ENCODE measurements at regions of chr2 and their contacts with region 1.

Region 1: DNA sequence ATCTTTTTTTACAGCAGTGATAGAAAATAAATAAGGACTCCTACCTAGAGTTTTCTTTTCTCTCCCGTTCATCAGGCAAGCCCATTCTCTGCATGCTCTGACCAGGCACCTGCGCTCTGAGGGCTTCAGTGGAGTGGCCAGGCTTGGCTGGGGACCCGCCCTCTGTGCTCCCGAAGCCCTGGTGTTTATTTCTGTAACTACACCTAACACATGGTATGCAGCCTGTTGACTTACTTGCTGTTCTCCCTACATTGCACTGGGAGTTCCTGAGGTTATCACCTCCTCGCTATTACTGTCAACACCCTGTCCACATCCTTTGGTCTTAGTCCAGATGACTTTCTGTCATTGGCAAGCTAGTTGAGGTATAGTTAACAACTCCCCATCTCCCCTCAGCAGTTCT is 317.7 kb downstream of the LPIN1 start:
- DNase-seq: peak; percentile 56 to 69
- ATAC-seq: peak; percentile 95 to 98 (median 95)
- H3K4me3 ChIP-seq: peak overlapping the region; percentile 20
- H3K4me3 Mint-ChIP-seq: peak overlapping the region; percentile 99
- H3K27ac ChIP-seq: peak overlapping the region; percentile 24
- H3K27ac Mint-ChIP-seq: peak overlapping the region; percentile 87
- H3K4me1 ChIP-seq: peaks cover 50% of the 10 kb centered on the region
- H3K4me1 Mint-ChIP-seq: peaks cover 79 to 85% of the 10 kb centered on the region in 2 donors
- H3K27me3 ChIP-seq: peaks cover 9% of the 10 kb centered on the region
- H3K27me3 Mint-ChIP-seq: peaks cover 0 to 15% of the 10 kb centered on the region in 2 donors
- CTCF ChIP-seq: peak; percentile 59

Region 2: DNA sequence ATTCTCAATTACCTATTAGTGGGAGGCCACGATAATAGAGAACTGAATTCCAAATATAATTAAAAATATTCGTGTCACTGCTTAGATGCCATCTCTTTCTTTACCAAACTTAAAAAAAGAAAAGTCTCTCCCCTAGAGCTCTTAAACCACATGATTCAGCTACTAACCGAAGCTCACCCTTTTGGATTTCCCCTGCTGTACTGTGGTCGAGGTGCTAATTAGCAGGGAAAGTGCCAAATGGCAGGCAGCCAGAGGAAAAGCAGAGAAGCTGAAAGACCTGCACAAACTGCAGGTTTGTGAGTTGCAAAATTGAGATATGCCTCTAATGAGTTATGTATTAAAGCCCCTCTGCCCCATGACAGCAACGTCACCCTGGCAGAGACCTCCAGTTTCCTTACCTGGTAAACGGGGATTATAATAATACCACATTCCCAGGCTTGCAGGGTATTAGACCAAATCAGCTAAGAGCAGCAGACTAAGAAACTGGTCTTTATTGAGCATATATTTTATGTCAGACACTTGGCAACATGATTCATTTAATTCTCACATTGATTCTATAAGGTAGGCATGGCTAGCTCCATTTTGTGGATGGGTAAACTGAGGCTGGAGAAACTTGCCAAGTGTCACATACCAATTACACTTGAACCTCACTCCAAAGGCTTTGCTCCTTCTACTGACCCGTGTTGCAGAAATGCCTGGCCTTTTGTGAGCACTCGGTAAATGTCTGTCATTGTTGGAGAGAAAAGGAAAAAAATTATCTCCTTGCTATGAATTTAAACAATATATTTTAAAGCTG is 58.1 kb before region 1 on chr2:
- intact Hi-C with region 1: loop called (anchors 1 kb)
- DNase-seq: peak; percentile 81 to 91
- ATAC-seq: peak; percentile 86 to 98 (median 87)
- H3K4me3 ChIP-seq: no peak overlapping the region
- H3K4me3 Mint-ChIP-seq: peak overlapping the region; percentile 55
- H3K27ac ChIP-seq: no peak overlapping the region
- H3K27ac Mint-ChIP-seq: peak overlapping the region; percentile 50 to 81
- H3K4me1 ChIP-seq: peaks cover 19% of the 10 kb centered on the region
- H3K4me1 Mint-ChIP-seq: peaks cover 50 to 59% of the 10 kb centered on the region in 2 donors
- H3K27me3 ChIP-seq: peaks cover 67% of the 10 kb centered on the region
- H3K27me3 Mint-ChIP-seq: peaks cover 74 to 94% of the 10 kb centered on the region in 2 donors
- CTCF ChIP-seq: no peak

Region 3: DNA sequence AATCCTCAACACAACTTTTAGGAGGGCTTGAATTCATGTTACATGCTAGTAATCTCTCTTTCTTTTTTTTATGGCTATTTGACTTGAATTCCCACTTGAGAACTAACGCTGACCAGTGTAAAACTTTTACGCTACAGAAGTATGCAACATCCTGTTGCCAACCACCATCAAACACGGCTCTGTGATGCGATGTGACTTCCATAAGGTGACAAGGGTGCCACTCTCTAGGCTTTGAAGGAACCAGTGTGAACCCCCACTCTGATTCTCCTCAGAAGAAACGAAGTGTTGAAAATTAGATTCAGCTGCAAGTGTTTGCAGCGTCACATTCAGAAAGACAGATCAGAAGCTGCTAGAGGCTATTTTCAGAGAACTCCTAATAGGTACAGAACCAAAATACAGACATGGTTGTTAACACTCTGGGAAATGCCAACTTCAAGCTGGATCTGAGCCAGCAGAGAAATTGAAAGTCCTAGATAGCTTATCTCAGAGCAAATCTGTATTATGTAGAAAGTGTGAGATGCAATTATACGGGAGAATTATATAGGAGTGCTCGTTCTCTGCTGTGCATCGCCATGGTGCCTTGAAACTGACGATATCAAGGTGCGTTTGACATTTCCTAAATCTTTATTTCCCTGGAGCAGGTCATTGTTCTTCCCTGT is 46.5 kb before region 1 on chr2:
- intact Hi-C with region 1: no loop called
- DNase-seq: peak in 1 of 2 donors; percentile 20
- ATAC-seq: peak; percentile 30 to 92 (median 58)
- H3K4me3 ChIP-seq: no peak overlapping the region
- H3K4me3 Mint-ChIP-seq: peak overlapping the region; percentile 7
- H3K27ac ChIP-seq: no peak overlapping the region
- H3K27ac Mint-ChIP-seq: no peak overlapping the region
- H3K4me1 ChIP-seq: peaks cover 3% of the 10 kb centered on the region
- H3K4me1 Mint-ChIP-seq: peaks cover 26 to 33% of the 10 kb centered on the region in 2 donors
- H3K27me3 ChIP-seq: peaks cover 26% of the 10 kb centered on the region
- H3K27me3 Mint-ChIP-seq: peaks cover 69 to 79% of the 10 kb centered on the region in 2 donors
- CTCF ChIP-seq: no peak

Region 4: GRCh38 chr2:12044857-12045256 is 19.3 kb before region 1 on chr2:
- intact Hi-C with region 1: loop called (anchors 2 kb)
- DNase-seq: peak; percentile 26 to 64
- ATAC-seq: peak; percentile 77 to 86 (median 86)
- H3K4me3 ChIP-seq: no peak overlapping the region
- H3K4me3 Mint-ChIP-seq: peak overlapping the region; percentile 67
- H3K27ac ChIP-seq: peak overlapping the region; percentile 30
- H3K27ac Mint-ChIP-seq: peak overlapping the region; percentile 1 to 81
- H3K4me1 ChIP-seq: peaks cover 61% of the 10 kb centered on the region
- H3K4me1 Mint-ChIP-seq: peaks cover 63 to 96% of the 10 kb centered on the region in 2 donors
- H3K27me3 ChIP-seq: peaks cover 4% of the 10 kb centered on the region
- H3K27me3 Mint-ChIP-seq: peaks cover 7 to 41% of the 10 kb centered on the region in 2 donors
- CTCF ChIP-seq: no peak

Region 5: GRCh38 chr2:12074126-12074844 is 10.1 kb after region 1 on chr2:
- intact Hi-C with region 1: loop called (anchors 1 kb)
- DNase-seq: peak in 1 of 2 donors; percentile 27
- ATAC-seq: peak; percentile 74 to 91 (median 83)
- H3K4me3 ChIP-seq: no peak overlapping the region
- H3K4me3 Mint-ChIP-seq: peak overlapping the region; percentile 80
- H3K27ac ChIP-seq: no peak overlapping the region
- H3K27ac Mint-ChIP-seq: peak overlapping the region; percentile 76 to 83
- H3K4me1 ChIP-seq: peaks cover 18% of the 10 kb centered on the region
- H3K4me1 Mint-ChIP-seq: peaks cover 62 to 67% of the 10 kb centered on the region in 2 donors
- H3K27me3 ChIP-seq: no peaks in the 10 kb centered on the region
- H3K27me3 Mint-ChIP-seq: peaks cover 7 to 21% of the 10 kb centered on the region in 2 donors
- CTCF ChIP-seq: no peak

Region 6: DNA sequence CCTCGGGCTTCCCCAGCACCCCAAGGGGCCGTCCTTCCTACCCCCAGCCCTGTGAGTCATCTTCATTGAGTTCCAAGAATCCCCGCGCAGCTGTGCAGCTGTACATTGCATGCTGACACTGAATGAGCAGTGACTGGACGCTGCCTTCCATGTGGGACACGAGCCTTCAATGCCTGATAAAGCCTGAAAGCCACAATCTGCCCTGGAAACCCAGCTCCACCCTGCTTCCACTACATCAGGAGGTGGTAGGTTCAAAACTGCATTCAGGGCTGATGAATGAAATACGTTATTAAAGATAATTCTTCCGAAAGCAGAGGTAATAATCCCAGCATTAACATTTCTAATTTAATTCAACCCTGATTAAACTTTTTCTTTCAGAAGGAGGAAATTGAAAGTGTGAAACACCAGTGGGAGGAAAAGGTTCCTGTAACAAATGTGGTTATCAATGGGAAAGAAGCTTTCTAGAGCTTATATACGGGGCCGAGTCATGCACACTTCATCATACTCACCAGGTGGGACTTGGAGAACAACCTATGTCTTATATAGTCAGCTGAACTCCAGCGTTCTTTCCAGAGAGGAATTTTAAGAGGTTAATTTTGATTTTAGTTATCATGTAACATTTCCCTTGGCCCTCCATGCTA is 42.4 kb after region 1 on chr2:
- intact Hi-C with region 1: no loop called
- DNase-seq: no peak
- ATAC-seq: no peak
- H3K4me3 ChIP-seq: no peak overlapping the region
- H3K4me3 Mint-ChIP-seq: no peak overlapping the region
- H3K27ac ChIP-seq: no peak overlapping the region
- H3K27ac Mint-ChIP-seq: no peak overlapping the region
- H3K4me1 ChIP-seq: peaks cover 8% of the 10 kb centered on the region
- H3K4me1 Mint-ChIP-seq: peaks cover 25 to 33% of the 10 kb centered on the region in 2 donors
- H3K27me3 ChIP-seq: no peaks in the 10 kb centered on the region
- H3K27me3 Mint-ChIP-seq: peaks cover 0 to 10% of the 10 kb centered on the region in 2 donors
- CTCF ChIP-seq: no peak